Activated naive CD4-positive, alpha-beta T cell treated with anti-CD3 and anti-CD28 coated beads for 36 hours (primary cell): ENCODE measurements at regions of chr1 and their contacts with region 1.

Region 1: DNA sequence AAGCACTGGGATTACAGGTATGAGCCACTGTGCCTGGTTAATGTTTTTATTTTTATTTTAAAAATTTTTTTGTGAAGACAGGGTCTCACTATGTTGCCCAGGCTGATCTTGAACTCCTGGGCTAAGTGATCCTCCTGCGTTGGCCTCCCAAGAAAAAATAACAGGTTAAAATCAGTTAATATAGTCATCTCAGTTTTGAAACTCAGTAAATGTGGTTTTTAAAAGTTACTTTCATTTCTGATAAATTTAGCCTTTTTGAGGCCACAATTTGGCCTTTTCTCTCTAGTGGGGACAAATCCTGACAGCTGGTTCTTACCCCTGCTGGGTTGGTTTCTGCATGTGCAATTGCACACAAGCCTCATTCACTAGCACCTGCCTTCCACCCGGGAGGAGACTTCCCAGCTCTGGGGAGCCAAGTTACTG is 13.3 kb downstream of the PMF1 start:
- DNase-seq: peak; percentile 59
- H3K4me3 Mint-ChIP-seq: no peak overlapping the region
- H3K27ac Mint-ChIP-seq: peak overlapping the region; percentile 100
- H3K4me1 Mint-ChIP-seq: peaks cover 59% of the 10 kb centered on the region
- H3K27me3 Mint-ChIP-seq: no peaks in the 10 kb centered on the region

Region 2: DNA sequence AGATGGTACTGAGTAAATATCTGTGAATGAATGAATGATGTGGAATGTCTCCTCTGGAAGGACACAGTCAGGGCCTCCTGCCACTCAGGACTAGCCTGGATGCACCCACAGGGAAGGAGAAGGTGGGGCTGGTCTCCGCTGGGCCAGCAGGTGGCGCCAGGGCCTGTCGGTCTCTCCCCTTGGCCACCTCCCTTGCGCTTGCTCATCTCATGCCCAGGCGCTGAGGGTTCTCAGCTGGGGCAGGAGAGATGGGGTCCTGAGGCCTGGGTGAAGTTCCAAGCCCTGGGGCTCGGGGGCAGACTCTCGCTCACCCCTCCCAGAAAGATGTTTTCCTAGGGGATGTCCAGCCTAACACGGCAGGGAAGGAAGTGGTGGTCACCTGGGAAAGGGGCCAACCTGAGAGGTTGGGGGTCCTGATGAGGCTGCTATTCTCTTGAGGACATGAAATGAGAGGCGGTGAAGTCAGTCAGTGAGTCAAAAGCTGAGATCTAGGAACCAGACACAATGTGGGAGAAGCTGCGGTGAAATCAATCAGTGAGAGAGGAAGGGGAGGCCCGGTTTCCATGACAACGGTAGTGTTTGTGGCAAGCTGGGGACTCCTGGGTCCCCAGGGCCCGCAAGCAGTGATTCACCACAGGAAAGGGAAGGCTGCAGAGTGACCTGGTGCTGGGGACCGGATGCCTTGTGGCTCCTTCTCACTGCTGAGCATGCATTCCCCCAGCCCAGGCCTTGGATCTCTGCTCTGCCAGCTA is 129.3 kb before region 1 on chr1:
- CTCF ChIA-PET with region 1: interaction called, 13 read pairs
- intact Hi-C with region 1: loop called (anchors 1 kb)
- DNase-seq: peak; percentile 98
- H3K4me3 Mint-ChIP-seq: peak overlapping the region; percentile 40
- H3K27ac Mint-ChIP-seq: peak overlapping the region; percentile 99
- H3K4me1 Mint-ChIP-seq: peaks cover 49% of the 10 kb centered on the region
- H3K27me3 Mint-ChIP-seq: peaks cover 11% of the 10 kb centered on the region

Region 3: GRCh38 chr1:156146020-156146768 is 79.9 kb before region 1 on chr1:
- CTCF ChIA-PET with region 1: interaction called, 244 read pairs
- intact Hi-C with region 1: loop called (anchors 1 kb)
- DNase-seq: peak; percentile 63
- H3K4me3 Mint-ChIP-seq: peak overlapping the region; percentile 67
- H3K27ac Mint-ChIP-seq: peak overlapping the region; percentile 85
- H3K4me1 Mint-ChIP-seq: peaks cover 49% of the 10 kb centered on the region
- H3K27me3 Mint-ChIP-seq: no peaks in the 10 kb centered on the region

Region 4: DNA sequence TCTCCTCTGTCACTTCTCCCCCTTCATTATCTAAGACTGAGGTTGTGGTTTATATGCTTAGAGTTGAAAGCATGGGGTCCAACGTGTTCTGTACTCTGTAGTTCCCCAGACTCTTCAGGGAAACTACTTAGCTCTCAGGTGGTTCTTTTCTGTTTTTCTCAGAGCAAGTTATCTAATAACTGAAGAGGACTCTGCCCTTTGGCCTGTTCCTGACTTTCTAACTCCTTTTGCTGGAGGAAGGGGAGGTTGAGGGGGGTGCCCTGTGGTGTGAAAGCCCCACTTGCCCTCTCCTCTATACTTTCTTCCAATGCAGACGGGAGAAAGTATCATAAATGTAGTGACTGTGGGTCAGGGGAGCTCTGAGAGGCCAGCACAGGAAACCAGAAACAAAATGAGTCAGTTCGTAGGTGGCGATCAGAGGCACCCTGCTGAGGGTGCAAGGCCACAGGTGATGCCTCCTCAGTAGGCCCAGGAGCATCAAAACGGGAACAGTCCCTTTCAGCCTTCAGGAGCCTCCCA is 27.2 kb before region 1 on chr1:
- CTCF ChIA-PET with region 1: interaction called, 90 read pairs
- intact Hi-C with region 1: loop called (anchors 1 kb)
- DNase-seq: peak; percentile 72
- H3K4me3 Mint-ChIP-seq: no peak overlapping the region
- H3K27ac Mint-ChIP-seq: no peak overlapping the region
- H3K4me1 Mint-ChIP-seq: peaks cover 66% of the 10 kb centered on the region
- H3K27me3 Mint-ChIP-seq: no peaks in the 10 kb centered on the region

Region 5: DNA sequence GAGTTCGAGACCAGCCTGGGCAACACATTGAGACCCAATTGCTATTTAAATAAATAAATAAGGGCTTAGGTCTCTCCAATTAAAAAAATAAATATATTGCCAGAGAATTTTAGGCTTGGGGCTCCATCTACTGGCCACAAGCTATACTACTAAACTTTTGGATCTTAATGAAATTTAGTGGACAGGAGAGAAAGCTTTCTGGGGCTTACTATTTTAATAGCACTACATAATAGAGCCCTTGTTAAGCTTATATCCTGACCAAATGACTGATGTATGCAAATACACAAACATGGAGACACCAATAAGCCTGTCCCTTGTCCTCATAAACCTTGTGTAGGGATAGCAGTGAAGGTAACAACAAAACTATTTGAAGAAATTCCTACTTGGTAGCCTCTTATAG is 93.5 kb after region 1 on chr1:
- CTCF ChIA-PET with region 1: interaction called, 4 read pairs
- intact Hi-C with region 1: loop called (anchors 5 kb)
- DNase-seq: peak; percentile 38
- H3K4me3 Mint-ChIP-seq: no peak overlapping the region
- H3K27ac Mint-ChIP-seq: no peak overlapping the region
- H3K4me1 Mint-ChIP-seq: no peaks in the 10 kb centered on the region
- H3K27me3 Mint-ChIP-seq: no peaks in the 10 kb centered on the region